Mucosa of descending colon (tissue), 3 donors: ENCODE measurements at regions of chr15 and their contacts with region 1.

Region 1: DNA sequence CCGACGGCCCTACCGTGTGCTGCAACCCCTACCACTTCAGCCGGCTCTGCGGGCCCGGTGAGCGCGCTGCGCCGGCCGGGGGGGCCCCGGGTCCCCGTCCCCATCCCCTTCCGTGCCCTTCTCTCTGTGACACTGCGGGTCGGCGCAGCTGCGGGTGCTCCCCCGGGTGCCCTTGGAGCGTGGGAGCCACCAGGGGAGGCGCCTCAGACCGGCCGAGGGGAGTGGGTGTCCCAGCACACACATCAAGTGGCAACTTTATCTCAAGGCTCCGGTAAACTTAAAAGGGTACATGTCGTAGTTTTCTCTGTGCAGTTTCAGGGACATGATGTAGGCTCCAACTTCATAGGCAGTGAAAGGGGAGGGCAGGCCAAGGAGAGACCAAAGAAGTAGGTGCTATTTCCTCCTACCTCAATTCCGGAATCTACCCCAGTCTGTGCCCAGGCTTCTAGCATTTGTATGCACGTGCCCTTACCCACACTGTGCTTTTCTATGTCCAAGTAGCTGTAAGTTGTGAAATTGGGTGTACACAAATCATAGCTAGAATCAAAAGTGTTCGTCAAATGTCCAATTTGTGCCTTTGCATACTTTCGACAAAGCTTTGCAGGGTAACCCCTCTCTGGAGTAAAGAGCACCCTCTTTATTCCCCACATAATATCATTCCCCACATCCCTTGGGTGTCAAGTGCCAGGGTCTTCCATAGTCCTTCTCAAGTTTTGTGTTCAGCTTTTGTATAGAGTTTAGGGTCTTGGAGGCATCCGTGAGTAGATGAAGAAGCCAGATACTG is 2.2 kb downstream of the SMAD6 start:
- DNase-seq: peak in 2 of 3 donors; percentile 32 to 55
- ATAC-seq: no peak
- H3K4me3 ChIP-seq: peak overlapping the region; percentile 34
- H3K4me1 ChIP-seq: peaks cover 34% of the 10 kb centered on the region
- CTCF ChIP-seq: no peak

Region 2: GRCh38 chr15:66638377-66638776 is 65.8 kb before region 1 on chr15:
- intact Hi-C with region 1: no loop called
- DNase-seq: no peak
- ATAC-seq: no peak
- H3K4me3 ChIP-seq: no peak overlapping the region
- H3K4me1 ChIP-seq: no peaks in the 10 kb centered on the region
- CTCF ChIP-seq: no peak

Region 3: GRCh38 chr15:66779306-66780009 is 75.2 kb after region 1 on chr15:
- intact Hi-C with region 1: loop called in 1 of 2 experiments (anchors 2 kb)
- DNase-seq: peak in 1 of 3 donors; percentile 64
- ATAC-seq: peak; percentile 80
- H3K4me3 ChIP-seq: no peak overlapping the region
- H3K4me1 ChIP-seq: peaks cover 30% of the 10 kb centered on the region
- CTCF ChIP-seq: no peak

Region 4: DNA sequence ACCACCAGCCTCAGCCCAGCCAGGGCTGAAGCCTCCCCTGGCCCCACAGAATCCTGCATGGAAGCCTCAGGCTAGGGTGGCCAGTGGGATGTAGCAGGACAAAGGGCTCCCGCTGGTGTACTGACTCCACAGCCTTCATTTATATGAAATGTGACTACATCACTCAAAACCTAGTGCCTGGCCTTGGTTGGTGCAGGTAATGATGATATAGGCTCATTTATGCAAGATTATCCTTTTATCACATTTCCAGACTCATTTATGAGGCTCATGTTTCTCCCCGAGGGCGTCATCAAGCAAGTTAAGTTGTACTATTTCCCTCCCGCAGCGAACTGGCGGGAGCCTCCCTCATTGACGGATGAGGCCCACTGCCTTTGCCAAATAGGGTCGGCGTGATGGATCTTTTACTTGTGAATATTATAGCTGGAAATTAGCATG is 182.0 kb after region 1 on chr15:
- intact Hi-C with region 1: no loop called
- DNase-seq: no peak
- ATAC-seq: no peak
- H3K4me3 ChIP-seq: no peak overlapping the region
- H3K4me1 ChIP-seq: no peaks in the 10 kb centered on the region
- CTCF ChIP-seq: no peak